CD4-positive, alpha-beta T cell (primary cell): ENCODE measurements at regions of chr17 and their contacts with region 1.

Region 1: GRCh38 chr17:12180644-12181261 is 160.1 kb downstream of the MAP2K4 start:
- DNase-seq: peak in 3 of 14 experiments; percentile 17 to 23 (median 22)
- ATAC-seq: no peak
- H3K4me3 ChIP-seq: no peak overlapping the region
- H3K4me3 Mint-ChIP-seq: no peak overlapping the region
- H3K27ac ChIP-seq: no peak overlapping the region
- H3K27ac Mint-ChIP-seq: no peak overlapping the region
- H3K4me1 ChIP-seq: no peaks in the 10 kb centered on the region
- H3K4me1 Mint-ChIP-seq: no peaks in the 10 kb centered on the region
- H3K27me3 ChIP-seq: no peaks in the 10 kb centered on the region
- H3K27me3 Mint-ChIP-seq: no peaks in the 10 kb centered on the region
- CTCF ChIP-seq: peak; percentile 63

Region 2: GRCh38 chr17:12230481-12231354 is 50.0 kb after region 1 on chr17:
- CTCF ChIA-PET with region 1: no interaction called
- POLR2A ChIA-PET with region 1: no interaction called
- intact Hi-C with region 1: no loop called
- DNase-seq: no peak
- ATAC-seq: no peak
- H3K4me3 ChIP-seq: no peak overlapping the region
- H3K4me3 Mint-ChIP-seq: no peak overlapping the region
- H3K27ac ChIP-seq: no peak overlapping the region
- H3K27ac Mint-ChIP-seq: no peak overlapping the region
- H3K4me1 ChIP-seq: no peaks in the 10 kb centered on the region
- H3K4me1 Mint-ChIP-seq: no peaks in the 10 kb centered on the region
- H3K27me3 ChIP-seq: no peaks in the 10 kb centered on the region
- H3K27me3 Mint-ChIP-seq: peaks cover 7% of the 10 kb centered on the region
- CTCF ChIP-seq: no peak

Region 3: GRCh38 chr17:13002766-13003451 is 822.2 kb after region 1 on chr17:
- CTCF ChIA-PET with region 1: no interaction called
- POLR2A ChIA-PET with region 1: no interaction called
- intact Hi-C with region 1: loop called in 1 of 2 experiments (anchors 5 kb)
- DNase-seq: peak; percentile 16 to 70 (median 34)
- ATAC-seq: no peak
- H3K4me3 ChIP-seq: no peak overlapping the region
- H3K4me3 Mint-ChIP-seq: no peak overlapping the region
- H3K27ac ChIP-seq: no peak overlapping the region
- H3K27ac Mint-ChIP-seq: no peak overlapping the region
- H3K4me1 ChIP-seq: no peaks in the 10 kb centered on the region
- H3K4me1 Mint-ChIP-seq: peaks cover 8% of the 10 kb centered on the region
- H3K27me3 ChIP-seq: no peaks in the 10 kb centered on the region
- H3K27me3 Mint-ChIP-seq: no peaks in the 10 kb centered on the region
- CTCF ChIP-seq: peak; percentile 83